ENCODE measurements at regions of chr11 and their contacts with region 1.

Region 1: DNA sequence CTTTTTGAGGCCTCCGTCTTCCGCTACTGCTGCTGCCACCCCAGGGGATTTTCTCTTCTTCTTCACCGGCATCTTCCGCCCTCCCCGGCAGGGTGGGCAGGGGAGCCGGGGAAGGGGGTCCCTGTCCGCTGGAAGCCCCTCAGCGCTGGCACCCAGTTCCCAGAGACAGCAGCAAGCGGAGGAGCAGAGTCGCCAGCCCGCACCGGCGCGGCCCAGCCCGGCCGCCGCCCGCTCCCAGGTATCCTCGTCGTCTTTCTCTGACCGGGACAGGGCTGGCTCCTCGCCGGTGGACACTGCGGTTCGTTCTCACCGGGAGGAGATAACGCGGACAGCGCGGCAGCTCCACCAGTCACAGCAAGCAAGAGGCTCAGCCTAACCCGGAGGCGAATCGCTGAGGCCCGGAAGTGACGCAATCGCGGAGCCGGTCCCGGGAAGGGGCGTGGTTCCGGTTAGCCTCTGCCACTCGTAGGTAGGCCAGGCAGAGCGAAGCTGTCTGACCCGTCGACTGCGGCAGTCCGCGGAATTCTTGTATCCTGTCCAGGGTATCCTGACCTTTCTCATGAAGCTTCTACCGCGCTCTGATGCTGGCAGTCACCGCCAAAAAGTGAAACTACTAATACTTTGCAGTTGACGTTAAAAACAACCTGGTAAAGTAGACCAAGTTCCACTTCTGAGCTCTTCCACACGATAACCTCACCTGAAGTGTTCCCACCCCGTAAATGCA is at the start of gene DCUN1D5:
- DNase-seq: peak; percentile 98
- ATAC-seq: peak; percentile 100
- total RNA-seq, gene DCUN1D5: 30.8 TPM

Region 2: GRCh38 chr11:103108933-103109817 is 17.2 kb after region 1 on chr11 and contains the start of gene DYNC2H1:
- intact Hi-C with region 1: loop called (anchors 1 kb)
- DNase-seq: peak; percentile 94
- ATAC-seq: peak; percentile 100
- total RNA-seq, gene DYNC2H1: 2.8 TPM

Measured in Right ventricle myocardium inferior (tissue), 1 donor.